ENCODE measurements at regions of chr17 and their contacts with region 1.

Region 1: DNA sequence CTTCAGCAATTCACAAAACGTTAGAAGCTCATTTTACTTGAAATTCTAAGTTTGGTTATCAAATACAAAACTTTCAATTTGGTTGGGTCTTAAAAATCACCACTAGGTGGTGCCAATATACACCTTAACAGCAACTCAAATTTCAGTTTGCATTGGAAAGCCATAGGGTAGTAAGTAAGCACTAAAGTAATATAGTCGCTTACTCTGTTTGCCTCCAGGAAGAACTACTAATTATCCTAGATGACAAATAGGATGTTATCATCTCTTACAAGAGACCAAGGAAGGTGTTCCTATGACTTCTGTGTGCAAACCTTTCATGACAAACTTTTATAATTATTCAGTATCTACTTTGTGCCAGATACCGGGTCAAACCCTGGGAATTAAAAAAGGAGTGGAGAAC is 93.3 kb downstream of the MYO1D start:
- DNase-seq: peak; percentile 58 to 83 (median 82)
- H3K4me3 ChIP-seq: no peak overlapping the region
- H3K27ac ChIP-seq: no peak overlapping the region
- H3K4me1 ChIP-seq: no peaks in the 10 kb centered on the region
- H3K27me3 ChIP-seq: no peaks in the 10 kb centered on the region

Region 2: GRCh38 chr17:32769839-32770238 is 13.8 kb before region 1 on chr17:
- CTCF ChIA-PET with region 1: interaction called, 14 read pairs
- POLR2A ChIA-PET with region 1: no interaction called
- DNase-seq: no peak
- H3K4me3 ChIP-seq: no peak overlapping the region
- H3K27ac ChIP-seq: no peak overlapping the region
- H3K4me1 ChIP-seq: no peaks in the 10 kb centered on the region
- H3K27me3 ChIP-seq: no peaks in the 10 kb centered on the region

Region 3: DNA sequence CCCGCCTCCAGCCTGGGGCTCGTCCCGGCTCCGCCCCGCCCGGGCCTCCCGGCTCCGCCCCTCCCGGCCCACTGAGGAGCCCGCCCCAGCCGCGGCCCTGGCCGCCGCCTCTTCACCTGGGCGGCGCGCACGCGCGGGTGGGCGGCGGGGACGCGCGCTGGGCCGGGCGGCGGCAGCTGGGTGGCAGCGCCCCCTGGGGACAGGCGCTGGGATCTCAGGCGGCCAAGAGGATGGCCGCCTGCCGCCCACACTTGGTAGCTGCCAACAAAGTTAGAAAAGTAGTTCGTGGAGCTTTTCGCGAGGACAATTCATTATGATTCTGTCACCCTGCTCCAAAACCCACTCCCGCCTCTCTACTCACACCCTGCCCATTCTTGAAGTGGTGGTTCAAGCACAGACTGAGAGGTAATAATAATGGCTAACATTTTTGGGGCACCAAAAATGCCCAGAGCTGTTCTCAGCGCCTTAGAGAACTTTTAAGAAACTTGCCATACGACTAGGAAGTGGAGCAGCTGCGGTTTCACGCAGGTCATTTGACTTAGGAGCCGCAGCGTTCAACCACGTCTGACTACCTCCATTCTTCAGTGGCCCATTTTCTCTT is 93.7 kb after region 1 on chr17:
- CTCF ChIA-PET with region 1: interaction called, 35 read pairs
- POLR2A ChIA-PET with region 1: interaction called, 3 read pairs
- DNase-seq: peak; percentile 84 to 92 (median 92)
- H3K4me3 ChIP-seq: peak overlapping the region; percentile 65 to 92 (median 76)
- H3K27ac ChIP-seq: no peak overlapping the region
- H3K4me1 ChIP-seq: peaks cover 4 to 23% (median 13%) of the 10 kb centered on the region in 4 experiments
- H3K27me3 ChIP-seq: no peaks in the 10 kb centered on the region

Region 4: GRCh38 chr17:32909787-32910369 is 126.3 kb after region 1 on chr17:
- CTCF ChIA-PET with region 1: interaction called, 31 read pairs
- POLR2A ChIA-PET with region 1: no interaction called
- DNase-seq: peak; percentile 78 to 89 (median 84)
- H3K4me3 ChIP-seq: no peak overlapping the region
- H3K27ac ChIP-seq: no peak overlapping the region
- H3K4me1 ChIP-seq: peaks cover 0 to 3% (median 0%) of the 10 kb centered on the region in 4 experiments
- H3K27me3 ChIP-seq: no peaks in the 10 kb centered on the region

Region 5: GRCh38 chr17:32915245-32915644 is 131.6 kb after region 1 on chr17:
- CTCF ChIA-PET with region 1: interaction called, 31 read pairs
- POLR2A ChIA-PET with region 1: no interaction called
- DNase-seq: no peak
- H3K4me3 ChIP-seq: no peak overlapping the region
- H3K27ac ChIP-seq: no peak overlapping the region
- H3K4me1 ChIP-seq: no peaks in the 10 kb centered on the region
- H3K27me3 ChIP-seq: no peaks in the 10 kb centered on the region

Region 6: GRCh38 chr17:32936894-32937500 is 153.4 kb after region 1 on chr17:
- CTCF ChIA-PET with region 1: interaction called, 22 read pairs
- POLR2A ChIA-PET with region 1: no interaction called
- DNase-seq: peak; percentile 74 to 86 (median 86)
- H3K4me3 ChIP-seq: peak overlapping the region in 2 of 7 experiments; percentile 27 to 45
- H3K27ac ChIP-seq: no peak overlapping the region
- H3K4me1 ChIP-seq: peaks cover 0 to 22% (median 13%) of the 10 kb centered on the region in 4 experiments
- H3K27me3 ChIP-seq: peaks cover 0 to 2% (median 0%) of the 10 kb centered on the region in 5 experiments

Region 7: GRCh38 chr17:32997753-32998632 is 214.4 kb after region 1 on chr17:
- CTCF ChIA-PET with region 1: interaction called, 12 read pairs
- POLR2A ChIA-PET with region 1: no interaction called
- DNase-seq: peak; percentile 58 to 80 (median 71)
- H3K4me3 ChIP-seq: peak overlapping the region in 1 of 7 experiments; percentile 48
- H3K27ac ChIP-seq: no peak overlapping the region
- H3K4me1 ChIP-seq: peaks cover 0 to 22% (median 4%) of the 10 kb centered on the region in 4 experiments
- H3K27me3 ChIP-seq: peaks cover 0 to 13% (median 4%) of the 10 kb centered on the region in 5 experiments